Heart right ventricle (tissue), 16 donors: ENCODE measurements at regions of chr2 and their contacts with region 1.

Region 1: DNA sequence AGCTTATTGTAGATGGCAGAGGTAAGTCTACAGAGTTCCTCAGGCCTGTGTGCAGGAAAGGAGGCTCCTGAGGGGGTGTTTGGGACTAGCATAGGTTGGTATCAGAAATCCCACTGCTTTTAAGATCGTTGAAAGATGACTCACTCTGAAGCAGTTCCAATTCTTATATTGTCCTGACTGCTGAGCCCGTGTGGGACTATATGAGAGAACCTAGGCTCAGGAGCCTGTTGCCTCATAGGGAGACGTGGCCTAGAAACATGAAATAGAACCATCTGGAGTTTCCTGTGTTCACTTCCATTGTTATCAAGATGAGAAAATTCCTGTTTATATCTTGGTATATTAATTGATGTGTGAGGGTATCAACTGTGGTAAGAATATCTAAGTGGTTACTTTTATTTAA is 5.7 kb downstream of the CCT7 start:
- DNase-seq: no peak
- ATAC-seq: peak in 1 of 8 donors; percentile 25
- H3K4me3 ChIP-seq: no peak overlapping the region
- H3K27ac ChIP-seq: no peak overlapping the region
- H3K4me1 ChIP-seq: peaks cover 0 to 69% (median 55%) of the 10 kb centered on the region in 9 donors
- H3K27me3 ChIP-seq: no peaks in the 10 kb centered on the region
- CTCF ChIP-seq: no peak

Region 2: GRCh38 chr2:73176881-73177644 is 62.7 kb before region 1 on chr2:
- intact Hi-C with region 1: no loop called
- DNase-seq: peak; percentile 92
- ATAC-seq: peak; percentile 92 to 96 (median 94)
- H3K4me3 ChIP-seq: peak overlapping the region; percentile 26 to 75 (median 60)
- H3K27ac ChIP-seq: peak overlapping the region in 9 of 10 donors; percentile 71 to 89 (median 80)
- H3K4me1 ChIP-seq: peaks cover 4 to 31% (median 25%) of the 10 kb centered on the region in 9 donors
- H3K27me3 ChIP-seq: peaks cover 0 to 61% (median 27%) of the 10 kb centered on the region in 7 donors
- CTCF ChIP-seq: peak; percentile 97 to 99 (median 98)

Region 3: GRCh38 chr2:73187549-73187948 is 52.2 kb before region 1 on chr2:
- intact Hi-C with region 1: loop called in 1 of 10 experiments (anchors 1 kb)
- DNase-seq: no peak
- ATAC-seq: no peak
- H3K4me3 ChIP-seq: no peak overlapping the region
- H3K27ac ChIP-seq: no peak overlapping the region
- H3K4me1 ChIP-seq: no peaks in the 10 kb centered on the region
- H3K27me3 ChIP-seq: peaks cover 0 to 26% (median 3%) of the 10 kb centered on the region in 7 donors
- CTCF ChIP-seq: no peak

Region 4: GRCh38 chr2:73212448-73213176 is 27.2 kb before region 1 on chr2:
- intact Hi-C with region 1: no loop called
- DNase-seq: peak; percentile 47 to 69
- ATAC-seq: peak; percentile 57 to 77 (median 70)
- H3K4me3 ChIP-seq: no peak overlapping the region
- H3K27ac ChIP-seq: no peak overlapping the region
- H3K4me1 ChIP-seq: peaks cover 0 to 26% (median 21%) of the 10 kb centered on the region in 9 donors
- H3K27me3 ChIP-seq: no peaks in the 10 kb centered on the region
- CTCF ChIP-seq: peak; percentile 73 to 96 (median 88)